ENCODE measurements at regions of chr12 and their contacts with region 1.

Region 1: DNA sequence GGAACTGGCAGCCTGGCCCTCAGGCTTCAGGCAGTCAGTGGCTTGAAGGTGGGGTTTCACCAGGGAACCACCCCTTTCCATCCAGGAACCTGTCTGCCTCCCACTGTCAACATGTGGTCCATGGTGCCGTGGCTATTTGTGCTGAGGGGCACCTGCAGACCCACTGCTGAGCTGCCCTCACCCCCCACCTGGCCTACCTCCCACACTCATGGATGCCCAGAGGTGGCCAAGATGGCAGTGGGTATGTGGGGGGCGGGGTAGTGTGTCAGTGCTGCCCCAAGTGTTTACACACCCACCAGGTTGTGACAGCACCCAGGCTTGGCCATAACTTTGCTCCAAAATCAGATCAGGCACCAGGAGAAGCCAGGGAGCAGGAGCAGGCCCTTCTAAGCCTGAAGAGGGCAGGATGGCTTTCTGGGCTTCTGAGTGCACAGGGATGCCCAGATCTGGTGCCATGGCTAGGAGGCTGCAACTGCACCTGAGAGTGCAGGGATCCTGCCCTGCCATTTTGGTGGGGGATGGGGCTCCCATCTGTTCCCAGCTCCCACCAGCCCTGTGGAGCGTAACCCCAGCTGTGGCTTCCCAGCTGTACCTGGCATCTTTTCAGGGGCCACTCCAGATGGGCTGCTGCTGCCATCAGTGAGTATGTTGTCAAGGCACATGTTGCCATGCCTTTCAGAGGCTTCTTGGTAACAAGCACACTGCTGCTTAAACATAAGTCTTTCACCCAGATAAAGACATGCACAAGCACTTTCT is 263.9 kb downstream of the LRIG3 start:
- DNase-seq: no peak
- ATAC-seq: no peak
- H3K4me3 ChIP-seq: no peak overlapping the region
- H3K27ac ChIP-seq: no peak overlapping the region
- H3K4me1 ChIP-seq: no peaks in the 10 kb centered on the region
- H3K27me3 ChIP-seq: no peaks in the 10 kb centered on the region
- CTCF ChIP-seq: no peak

Region 2: DNA sequence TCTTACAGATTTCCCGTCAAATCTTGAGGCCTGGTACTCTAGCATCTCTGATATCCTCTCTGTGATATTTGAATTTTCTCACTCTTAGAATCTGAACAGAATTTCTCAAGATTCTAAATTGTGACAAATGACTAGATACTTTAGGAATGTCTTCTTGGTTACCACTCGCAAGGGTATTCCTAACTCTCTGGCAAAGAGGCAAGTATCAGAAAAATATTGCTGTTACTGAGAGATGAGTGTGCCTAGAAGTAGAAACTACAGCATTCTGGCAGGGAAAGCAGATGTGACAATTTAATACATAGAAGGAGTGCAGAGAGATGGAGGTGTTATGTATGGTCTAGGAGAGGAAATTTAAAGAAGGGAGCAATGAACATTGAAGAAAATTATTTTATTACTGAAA is 203.9 kb before region 1 on chr12:
- CTCF ChIA-PET with region 1: no interaction called
- POLR2A ChIA-PET with region 1: no interaction called
- intact Hi-C with region 1: no loop called
- DNase-seq: no peak
- ATAC-seq: no peak
- H3K4me3 ChIP-seq: no peak overlapping the region
- H3K27ac ChIP-seq: no peak overlapping the region
- H3K4me1 ChIP-seq: no peaks in the 10 kb centered on the region
- H3K27me3 ChIP-seq: no peaks in the 10 kb centered on the region
- CTCF ChIP-seq: no peak

Region 3: GRCh38 chr12:58566599-58566998 is 89.8 kb before region 1 on chr12:
- CTCF ChIA-PET with region 1: no interaction called
- POLR2A ChIA-PET with region 1: no interaction called
- intact Hi-C with region 1: loop called (anchors 10 kb)
- DNase-seq: peak; percentile 90
- ATAC-seq: peak; percentile 95
- H3K4me3 ChIP-seq: no peak overlapping the region
- H3K27ac ChIP-seq: peak overlapping the region; percentile 66
- H3K4me1 ChIP-seq: peaks cover 25% of the 10 kb centered on the region
- H3K27me3 ChIP-seq: no peaks in the 10 kb centered on the region
- CTCF ChIP-seq: no peak

Region 4: DNA sequence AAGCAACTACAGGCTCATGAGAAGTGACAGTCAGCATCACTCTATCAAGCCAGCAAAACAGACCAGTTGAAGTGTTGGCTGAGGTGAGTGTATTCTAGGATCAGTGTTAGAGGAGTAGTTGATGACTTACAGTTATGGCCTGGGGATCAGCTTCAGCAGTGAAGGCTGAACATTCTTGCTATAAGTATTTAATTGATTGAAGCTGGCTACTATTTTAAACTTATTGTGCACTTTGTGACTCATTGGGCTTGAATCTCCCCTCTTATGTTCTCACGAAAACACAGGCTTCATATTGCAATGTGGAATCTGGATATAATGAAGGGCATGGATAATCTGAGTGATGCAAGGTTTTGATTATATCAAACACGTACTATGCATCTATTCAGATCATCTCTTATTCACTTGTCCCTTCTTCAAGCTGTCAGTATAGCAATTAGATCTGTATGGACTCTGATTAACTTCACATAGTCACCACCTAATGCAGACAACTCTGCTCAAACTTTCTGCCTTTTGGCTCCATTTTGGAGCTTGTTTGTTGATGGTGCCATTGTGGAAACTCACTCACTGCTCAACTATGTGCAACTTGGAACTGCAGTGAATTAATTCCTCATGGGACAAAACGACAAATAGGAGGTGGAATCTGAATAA is 1248.6 kb after region 1 on chr12:
- CTCF ChIA-PET with region 1: no interaction called
- POLR2A ChIA-PET with region 1: interaction called, 30 read pairs
- intact Hi-C with region 1: no loop called
- DNase-seq: no peak
- ATAC-seq: no peak
- H3K4me3 ChIP-seq: no peak overlapping the region
- H3K27ac ChIP-seq: no peak overlapping the region
- H3K4me1 ChIP-seq: no peaks in the 10 kb centered on the region
- H3K27me3 ChIP-seq: no peaks in the 10 kb centered on the region
- CTCF ChIP-seq: no peak

Measured in PC-3 (cell line).